ENCODE measurements at regions of chr17 and their contacts with region 1.

Region 1: DNA sequence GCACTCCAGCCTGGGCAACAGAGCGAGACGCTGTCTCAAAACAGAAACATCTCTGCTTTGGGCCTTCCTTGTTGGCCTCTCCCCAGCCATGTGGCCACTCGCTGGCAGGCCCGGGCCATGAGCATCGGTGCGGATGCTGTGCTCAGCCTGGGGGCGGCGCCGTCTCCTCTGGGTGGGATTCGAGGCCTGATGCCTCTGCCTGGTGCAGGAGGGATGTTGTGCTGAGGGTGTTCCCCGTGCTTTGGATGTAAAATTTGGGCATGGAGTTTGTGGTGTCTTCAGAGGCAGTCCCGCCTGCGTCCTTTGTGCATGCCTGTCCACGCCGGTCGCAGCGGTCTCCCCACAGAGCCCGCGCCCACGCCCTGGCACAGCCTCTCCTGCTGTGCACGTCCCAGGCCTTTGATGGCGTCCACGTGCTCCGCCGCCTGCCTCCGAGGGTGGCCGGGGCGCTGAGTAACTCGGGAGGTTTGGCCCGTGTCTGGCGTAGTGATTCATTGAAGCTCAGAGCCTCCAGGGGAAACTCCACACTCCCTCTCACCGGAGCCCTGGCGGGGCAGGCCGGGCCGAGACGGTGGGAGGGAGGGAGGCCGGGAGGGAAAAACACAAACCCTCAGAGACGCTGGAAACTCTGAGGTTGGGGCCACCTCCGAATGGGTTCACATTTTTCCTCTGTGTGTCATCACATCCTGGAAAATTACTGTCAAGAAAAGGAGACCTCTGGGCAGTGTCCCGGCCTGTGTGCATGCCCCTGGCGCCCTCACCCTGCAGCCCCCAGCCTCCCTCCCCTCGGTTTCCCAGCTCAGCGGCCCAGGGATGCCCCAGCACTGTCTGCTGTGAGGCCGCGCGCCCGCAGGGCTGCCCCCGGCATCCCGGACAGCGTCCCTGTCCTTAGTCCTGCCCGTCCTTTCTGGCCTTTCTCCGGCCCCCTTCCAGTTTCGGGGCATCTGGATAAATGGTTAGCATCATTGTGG is 19.0 kb downstream of the CENPX start:
- DNase-seq: peak; percentile 48 to 71
- ATAC-seq: peak; percentile 71 to 72
- H3K4me3 ChIP-seq: peak overlapping the region in 1 of 4 donors; percentile 13
- H3K27ac ChIP-seq: peak overlapping the region; percentile 7 to 58 (median 44)
- H3K4me1 ChIP-seq: peaks cover 35 to 63% of the 10 kb centered on the region in 2 donors
- H3K27me3 ChIP-seq: no peaks in the 10 kb centered on the region
- CTCF ChIP-seq: no peak
- POLR2A ChIP-seq: no peak

Region 2: DNA sequence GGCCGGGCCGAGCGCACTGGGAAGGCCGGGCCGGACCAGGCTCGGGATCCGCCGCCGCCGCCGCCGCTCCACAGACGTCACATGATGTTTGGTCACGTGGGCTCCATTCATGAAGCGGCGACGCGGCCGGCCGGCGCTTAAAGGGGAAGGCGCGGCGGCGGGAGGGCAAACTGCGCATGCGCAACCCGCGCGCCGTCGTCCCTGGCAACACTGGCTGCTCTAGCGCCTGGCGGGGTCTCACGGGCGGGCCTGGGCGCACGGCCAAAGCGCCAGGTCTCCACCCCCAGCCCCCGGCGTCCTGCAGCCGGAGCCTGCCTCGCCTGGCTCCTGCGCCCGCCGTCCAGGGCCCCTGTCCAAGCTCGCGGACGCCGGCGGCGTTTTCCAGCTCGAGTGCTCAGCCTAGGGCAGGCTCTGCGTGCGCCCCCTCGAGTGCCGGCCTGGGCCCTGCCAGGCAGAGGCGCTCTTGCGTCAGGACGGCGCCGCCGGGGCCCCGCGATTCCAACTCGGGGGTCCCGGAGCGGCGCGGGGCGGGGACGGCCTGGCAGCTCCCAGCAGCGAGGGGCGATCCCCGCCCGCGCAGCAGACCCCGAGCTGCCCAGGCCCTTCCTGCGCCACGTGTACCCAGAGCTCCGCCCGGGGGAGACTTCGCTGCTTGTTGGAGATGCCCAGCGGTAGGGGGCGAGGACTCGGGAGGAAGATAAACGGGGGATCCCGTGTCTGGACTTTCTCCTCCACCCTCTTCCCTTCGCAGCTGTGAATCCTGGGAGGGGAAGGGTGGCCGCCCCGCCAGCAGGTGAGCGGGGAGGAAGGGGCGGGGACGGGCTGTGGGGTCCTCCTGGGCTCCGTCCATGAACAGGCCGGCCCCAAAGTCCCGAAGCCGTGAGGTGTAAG is 75.8 kb before region 1 on chr17 and contains the start of gene MAFG:
- in situ Hi-C with region 1: no loop called
- intact Hi-C with region 1: no loop called
- DNase-seq: peak; percentile 82 to 86
- ATAC-seq: peak; percentile 55 to 59
- H3K4me3 ChIP-seq: peak within 1 kb of the TSS; percentile 68 to 89 (median 77)
- H3K27ac ChIP-seq: peak within 1 kb of the TSS; percentile 90 to 98 (median 93)
- H3K4me1 ChIP-seq: peaks cover 38 to 40% of the 10 kb centered on the region in 2 donors
- H3K27me3 ChIP-seq: peaks cover 0 to 3% (median 0%) of the 10 kb centered on the region in 3 donors
- CTCF ChIP-seq: peak in 4 of 5 experiments; percentile 1 to 20 (median 19)
- POLR2A ChIP-seq: peak; percentile 92 to 95
- total RNA-seq, gene MAFG: 37.1 to 65.5 (median 51.9) TPM

Region 3: GRCh38 chr17:81967533-81968395 is 35.9 kb before region 1 on chr17:
- in situ Hi-C with region 1: no loop called
- intact Hi-C with region 1: loop called (anchors 1 kb)
- DNase-seq: peak; percentile 55 to 78
- ATAC-seq: peak; percentile 79 to 82
- H3K4me3 ChIP-seq: peak overlapping the region; percentile 11 to 51 (median 40)
- H3K27ac ChIP-seq: peak overlapping the region in 3 of 4 donors; percentile 59 to 82 (median 69)
- H3K4me1 ChIP-seq: peaks cover 7 to 19% of the 10 kb centered on the region in 2 donors
- H3K27me3 ChIP-seq: peaks cover 0 to 3% (median 0%) of the 10 kb centered on the region in 3 donors
- CTCF ChIP-seq: no peak
- POLR2A ChIP-seq: peak; percentile 14 to 22

Region 4: DNA sequence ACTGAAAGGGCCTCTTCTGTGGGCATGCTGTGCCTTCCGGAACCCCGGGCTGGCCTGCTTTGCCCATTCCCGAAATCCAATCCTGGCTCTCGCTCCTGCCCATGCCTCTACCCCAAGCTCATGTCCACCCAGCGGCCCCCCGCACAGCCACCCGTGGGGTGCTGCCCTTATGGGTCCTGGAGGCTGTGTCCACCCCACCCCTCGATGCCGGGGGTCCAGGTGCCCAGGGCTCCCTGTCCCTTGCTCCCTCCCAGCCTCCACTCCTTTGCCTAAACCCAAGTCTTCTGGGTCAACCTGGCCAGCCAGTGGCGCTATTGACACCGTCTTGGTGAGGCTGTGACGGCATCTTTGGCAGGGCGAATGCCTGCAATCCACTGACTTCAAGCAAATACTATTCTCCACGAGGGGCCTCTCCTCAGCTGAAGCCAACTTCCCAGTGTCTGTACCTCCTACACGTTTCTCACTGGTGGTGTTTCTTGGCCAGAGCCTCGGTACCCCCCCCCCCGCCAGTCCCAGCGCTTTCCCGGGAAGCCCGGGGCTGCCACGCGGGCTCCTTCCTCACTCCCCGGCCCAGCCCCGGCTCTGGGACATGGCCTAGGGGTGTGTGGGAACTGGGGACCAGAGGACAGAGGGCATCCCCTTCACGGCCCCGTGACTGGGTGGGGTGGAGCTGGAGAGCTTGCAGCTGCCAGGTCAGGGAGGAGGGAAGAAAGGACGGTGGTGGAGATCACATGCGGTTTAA is 74.1 kb after region 1 on chr17:
- in situ Hi-C with region 1: no loop called
- intact Hi-C with region 1: loop called (anchors 10 kb)
- DNase-seq: peak in 1 of 2 donors; percentile 52
- ATAC-seq: peak in 1 of 2 donors; percentile 59
- H3K4me3 ChIP-seq: no peak overlapping the region
- H3K27ac ChIP-seq: no peak overlapping the region
- H3K4me1 ChIP-seq: no peaks in the 10 kb centered on the region
- H3K27me3 ChIP-seq: no peaks in the 10 kb centered on the region
- CTCF ChIP-seq: no peak
- POLR2A ChIP-seq: no peak